ENCODE measurements at regions of chr14 and their contacts with region 1.

Region 1: DNA sequence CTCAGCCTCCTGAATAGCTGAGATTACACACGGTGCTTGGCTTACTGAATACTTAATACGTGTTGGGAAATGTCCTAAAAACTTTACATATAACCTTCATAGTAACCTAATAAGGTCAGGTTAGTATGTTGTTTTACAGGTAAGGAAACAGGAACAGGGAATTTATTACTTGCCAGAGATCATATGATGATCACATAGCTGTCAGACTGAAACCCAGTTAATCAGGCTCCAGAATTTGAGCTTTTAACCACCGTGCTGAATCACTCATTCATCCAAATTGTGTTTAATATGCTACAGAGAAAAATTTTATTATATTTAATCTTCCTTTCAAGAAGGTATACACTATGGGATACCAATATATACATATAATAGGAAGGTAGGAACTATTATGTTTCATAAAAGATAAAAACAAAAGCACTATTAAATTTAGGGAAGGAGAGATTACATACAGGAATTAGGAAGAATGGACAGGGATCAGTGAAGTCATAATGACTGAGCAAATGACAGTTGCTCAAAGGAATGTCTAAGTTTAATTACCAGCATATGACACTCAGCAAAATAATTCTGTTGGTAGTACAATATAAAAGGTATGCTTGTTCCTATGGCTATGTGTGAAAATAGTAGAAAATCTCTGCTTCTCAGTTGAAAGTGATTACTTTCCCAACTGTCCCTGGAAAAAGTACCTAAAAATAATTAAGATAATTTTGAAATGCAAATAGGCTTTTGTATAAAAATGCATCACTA is 59.3 kb downstream of the HEATR5A start:
- DNase-seq: no peak
- ATAC-seq: no peak
- H3K4me3 ChIP-seq: no peak overlapping the region
- H3K27ac ChIP-seq: no peak overlapping the region
- H3K4me1 ChIP-seq: peaks cover 0 to 3% of the 10 kb centered on the region in 2 donors
- H3K27me3 ChIP-seq: no peaks in the 10 kb centered on the region
- CTCF ChIP-seq: no peak
- POLR2A ChIP-seq: no peak

Region 2: GRCh38 chr14:30982533-30982932 is 378.6 kb before region 1 on chr14:
- in situ Hi-C with region 1: loop called in 2 of 4 experiments (anchors 25 kb)
- intact Hi-C with region 1: loop called (anchors 5 kb)
- DNase-seq: no peak
- ATAC-seq: no peak
- H3K4me3 ChIP-seq: no peak overlapping the region
- H3K27ac ChIP-seq: peak overlapping the region in 1 of 4 donors; percentile 25
- H3K4me1 ChIP-seq: no peaks in the 10 kb centered on the region
- H3K27me3 ChIP-seq: no peaks in the 10 kb centered on the region
- CTCF ChIP-seq: no peak
- POLR2A ChIP-seq: no peak

Region 3: DNA sequence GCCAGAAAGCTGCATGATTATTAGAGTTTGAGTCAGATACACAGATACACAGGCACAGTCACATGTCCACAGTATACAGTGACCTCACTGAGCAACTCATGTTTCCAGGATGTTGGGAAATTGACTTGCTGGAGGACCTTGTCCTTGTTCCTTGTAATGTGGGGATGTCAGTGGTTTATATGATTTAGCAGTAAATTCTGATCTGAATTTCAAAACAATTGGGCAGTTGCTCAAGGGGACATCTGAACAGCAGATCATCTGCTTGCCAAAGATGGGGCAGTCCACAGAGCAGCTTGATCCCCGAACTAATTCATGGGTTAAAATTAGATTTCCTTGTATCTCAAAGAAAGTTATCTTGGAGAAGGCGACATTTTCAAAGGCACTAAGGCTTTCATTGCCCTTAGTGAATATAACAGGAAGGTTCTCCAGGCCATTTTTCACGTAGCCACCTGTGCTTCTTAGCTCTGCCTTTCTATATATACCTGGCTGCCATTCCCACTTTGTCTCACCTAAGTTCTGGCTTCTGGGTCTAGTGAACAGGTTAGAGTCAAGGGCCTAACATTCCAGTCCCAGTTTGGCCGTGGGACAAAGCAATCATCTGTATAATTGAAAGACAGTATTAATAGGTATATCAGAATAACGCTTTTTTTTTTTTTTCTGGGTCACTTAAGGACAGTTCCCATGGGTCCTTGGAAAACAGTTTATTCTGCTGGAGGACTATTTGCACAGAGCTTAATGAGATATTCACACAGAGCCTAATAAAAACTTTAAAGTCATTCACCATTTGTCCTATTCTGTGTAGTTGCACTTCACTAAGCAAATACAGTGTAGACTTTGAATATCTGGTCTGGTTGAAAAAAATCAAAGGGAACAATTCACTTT is 270.0 kb before region 1 on chr14:
- in situ Hi-C with region 1: no loop called
- intact Hi-C with region 1: loop called (anchors 10 kb)
- DNase-seq: peak; percentile 79 to 80
- ATAC-seq: peak; percentile 94 to 97
- H3K4me3 ChIP-seq: peak overlapping the region in 1 of 4 donors; percentile 20
- H3K27ac ChIP-seq: peak overlapping the region; percentile 84 to 95 (median 92)
- H3K4me1 ChIP-seq: peaks cover 22 to 30% of the 10 kb centered on the region in 2 donors
- H3K27me3 ChIP-seq: no peaks in the 10 kb centered on the region
- CTCF ChIP-seq: no peak
- POLR2A ChIP-seq: peak; percentile 17 to 52

Region 4: DNA sequence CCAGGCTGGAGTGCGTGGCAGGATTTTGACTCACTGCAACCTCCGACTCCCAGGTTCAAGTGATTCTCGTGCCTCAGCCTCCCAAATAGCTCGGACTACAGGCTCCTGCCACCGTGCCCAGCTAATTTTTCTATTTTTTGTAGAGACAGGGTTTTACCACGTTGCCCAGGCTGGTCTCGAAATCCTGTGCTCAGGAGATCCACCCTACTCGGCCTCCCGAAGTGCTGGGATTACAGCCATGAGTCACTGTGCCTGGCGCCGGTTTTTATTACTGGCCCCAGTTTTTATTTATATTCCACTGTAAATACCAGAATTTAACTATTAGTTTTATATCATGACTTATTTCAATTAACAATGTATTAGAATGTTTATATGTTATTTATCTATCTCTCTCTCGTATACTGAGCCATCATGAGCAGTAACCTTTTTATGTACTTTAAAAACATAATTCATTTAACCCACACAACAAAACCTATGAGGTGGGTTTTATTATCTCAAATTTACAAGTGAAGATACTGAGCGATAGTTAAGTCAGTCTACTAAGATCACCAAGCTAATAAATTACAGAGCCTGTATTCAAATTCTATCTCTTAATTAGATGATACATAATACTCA is 201.3 kb before region 1 on chr14:
- in situ Hi-C with region 1: loop called in 2 of 4 experiments (anchors 25 kb)
- intact Hi-C with region 1: no loop called
- DNase-seq: peak in 1 of 2 donors; percentile 31
- ATAC-seq: no peak
- H3K4me3 ChIP-seq: no peak overlapping the region
- H3K27ac ChIP-seq: peak overlapping the region; percentile 47 to 84 (median 61)
- H3K4me1 ChIP-seq: peaks cover 5 to 9% of the 10 kb centered on the region in 2 donors
- H3K27me3 ChIP-seq: no peaks in the 10 kb centered on the region
- CTCF ChIP-seq: no peak
- POLR2A ChIP-seq: no peak

Measured in gastrocnemius medialis (tissue), 4 donors.